Activated naive CD4-positive, alpha-beta T cell treated with anti-CD3 and anti-CD28 coated beads for 36 hours (primary cell): ENCODE measurements at regions of chr4 and their contacts with region 1.

Region 1: DNA sequence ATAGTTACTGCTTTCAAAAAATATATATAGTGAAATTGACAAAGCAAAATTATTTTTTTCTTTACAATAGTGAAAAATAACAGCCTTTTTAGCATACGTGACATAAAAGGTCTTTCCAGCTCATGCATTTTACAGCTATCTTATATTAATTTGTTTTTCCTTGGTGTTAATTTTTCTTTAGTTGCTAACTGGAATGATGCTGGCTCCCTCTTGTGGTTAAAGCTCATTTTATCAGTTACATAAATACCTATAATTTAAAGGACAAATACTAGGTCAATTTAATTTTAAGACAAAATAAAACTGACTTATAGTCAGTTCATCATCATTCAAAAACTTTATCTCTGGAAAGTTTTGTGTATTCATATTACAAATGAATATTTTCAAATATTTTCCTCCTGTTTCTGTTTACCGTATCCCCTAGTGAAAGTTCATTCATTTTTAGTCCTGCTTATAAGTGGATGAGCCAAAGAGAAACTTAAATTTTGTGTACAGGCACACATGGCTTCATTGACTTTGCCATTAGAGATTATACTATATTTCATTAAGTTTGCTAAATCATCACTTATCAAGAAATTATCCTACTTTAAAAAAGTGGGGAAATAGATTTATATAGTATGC is 9.9 kb upstream of the ANAPC4 start:
- DNase-seq: peak; percentile 12
- H3K4me3 Mint-ChIP-seq: no peak overlapping the region
- H3K27ac Mint-ChIP-seq: no peak overlapping the region
- H3K4me1 Mint-ChIP-seq: no peaks in the 10 kb centered on the region
- H3K27me3 Mint-ChIP-seq: no peaks in the 10 kb centered on the region

Region 2: DNA sequence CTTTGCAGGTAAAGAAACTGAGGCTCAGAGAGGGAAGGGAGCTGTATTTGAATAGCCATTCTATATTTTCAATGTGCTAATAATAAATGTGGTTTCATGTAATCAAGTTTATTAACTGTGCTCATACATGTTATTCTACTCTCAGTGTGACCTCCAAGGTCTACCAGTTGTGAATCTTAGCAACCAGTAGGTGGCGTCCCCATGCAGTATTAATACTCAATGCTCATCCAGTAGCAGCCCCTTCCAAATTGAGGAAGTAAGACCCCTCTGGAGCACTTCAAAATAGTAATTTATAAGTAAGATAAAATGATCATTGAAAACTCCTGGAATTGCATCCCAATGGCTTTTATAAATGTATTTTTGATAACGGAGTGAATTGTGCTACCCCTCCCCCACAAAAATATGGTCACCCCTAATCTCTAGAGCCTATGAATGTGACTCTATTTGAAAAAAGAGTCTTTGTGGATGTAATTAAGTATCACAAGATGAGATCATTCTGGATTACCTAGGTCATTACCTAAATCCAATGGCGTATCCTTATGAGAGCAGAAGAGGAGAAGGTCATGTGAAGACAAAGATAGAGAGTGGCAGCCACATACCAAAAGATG is 186.5 kb before region 1 on chr4:
- CTCF ChIA-PET with region 1: interaction called, 27 read pairs
- intact Hi-C with region 1: loop called (anchors 1 kb)
- DNase-seq: peak; percentile 50
- H3K4me3 Mint-ChIP-seq: no peak overlapping the region
- H3K27ac Mint-ChIP-seq: no peak overlapping the region
- H3K4me1 Mint-ChIP-seq: peaks cover 32% of the 10 kb centered on the region
- H3K27me3 Mint-ChIP-seq: no peaks in the 10 kb centered on the region